HCT116 (cell line): ENCODE measurements at regions of chr6 and their contacts with region 1.

Region 1: DNA sequence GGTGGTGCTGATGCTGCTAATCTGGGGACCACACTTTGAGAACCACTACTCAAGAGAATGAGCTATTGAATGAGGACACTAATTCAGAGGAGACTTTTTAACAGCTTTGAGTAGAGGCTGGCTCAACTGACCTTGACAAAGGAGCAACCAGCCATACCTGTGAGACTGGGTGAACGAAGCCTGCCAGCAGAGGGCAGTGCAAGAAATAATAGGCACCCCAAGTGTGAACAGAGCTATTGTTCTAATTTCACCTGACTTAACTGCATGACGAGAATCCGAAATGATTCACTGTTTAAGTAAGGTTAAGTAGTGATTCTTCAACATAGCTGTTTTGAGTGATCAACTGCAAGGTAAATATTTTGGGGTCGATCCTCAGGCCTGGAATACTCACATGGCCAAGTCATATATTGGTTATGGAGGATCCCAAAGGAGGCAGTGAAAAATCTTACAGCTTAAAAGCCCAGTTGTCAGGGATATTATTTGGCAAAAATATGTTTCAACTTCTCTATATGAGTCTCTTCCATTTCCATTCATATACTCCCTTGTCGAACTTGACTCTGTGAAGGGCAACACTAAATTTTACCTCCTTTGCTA is 550.5 kb upstream of the MARCKS start:
- DNase-seq: peak; percentile 56
- ATAC-seq: peak; percentile 99
- H3K4me3 ChIP-seq: no peak overlapping the region
- H3K27ac ChIP-seq: no peak overlapping the region
- H3K4me1 ChIP-seq: peaks cover 0 to 9% of the 10 kb centered on the region in 2 experiments; a peak in 2 of 4 replicates
- H3K27me3 ChIP-seq: no peaks in the 10 kb centered on the region
- CTCF ChIP-seq: peak; percentile 55 to 91 (median 84); a peak in 5 of 6 replicates
- POLR2A ChIP-seq: no peak
- RAD21 ChIP-seq: peak; percentile 73

Region 2: DNA sequence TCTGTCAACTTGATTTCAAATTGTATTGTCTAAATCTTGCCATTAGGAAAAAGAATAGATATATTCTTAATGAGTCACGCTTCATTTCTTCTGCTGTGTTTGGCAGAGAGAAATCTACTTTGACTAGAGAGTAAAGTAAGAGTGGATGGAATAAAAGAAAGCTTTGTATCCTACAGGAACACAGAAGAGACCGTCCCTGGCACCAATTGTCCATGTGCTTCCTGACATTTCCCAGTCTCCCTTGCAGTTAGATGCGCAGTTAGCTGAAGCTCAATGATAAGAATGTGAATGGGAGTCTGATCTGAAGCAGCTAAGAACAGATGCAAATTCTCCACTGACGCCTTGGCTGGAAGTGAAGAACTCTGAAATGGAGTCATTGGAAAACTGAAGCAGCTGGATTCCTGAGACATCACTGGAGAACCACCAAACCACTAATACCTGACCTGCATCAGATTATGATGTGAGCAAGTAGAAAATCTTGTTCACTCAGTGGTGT is 22.3 kb after region 1 on chr6:
- CTCF ChIA-PET with region 1: interaction called, 15 read pairs
- POLR2A ChIA-PET with region 1: no interaction called
- RAD21 ChIA-PET with region 1: no interaction called
- intact Hi-C with region 1: no loop called
- DNase-seq: no peak
- ATAC-seq: no peak
- H3K4me3 ChIP-seq: no peak overlapping the region
- H3K27ac ChIP-seq: no peak overlapping the region
- H3K4me1 ChIP-seq: no peaks in the 10 kb centered on the region
- H3K27me3 ChIP-seq: no peaks in the 10 kb centered on the region
- CTCF ChIP-seq: no peak
- POLR2A ChIP-seq: no peak
- RAD21 ChIP-seq: no peak

Region 3: GRCh38 chr6:113464959-113465358 is 158.3 kb after region 1 on chr6:
- CTCF ChIA-PET with region 1: interaction called, 10 read pairs
- POLR2A ChIA-PET with region 1: no interaction called
- RAD21 ChIA-PET with region 1: interaction called in 1 of 2 experiments, 3 read pairs
- intact Hi-C with region 1: no loop called
- DNase-seq: peak; percentile 42
- ATAC-seq: peak; percentile 89
- H3K4me3 ChIP-seq: peak overlapping the region in 1 of 2 experiments; percentile 4; a peak in 1 of 4 replicates
- H3K27ac ChIP-seq: no peak overlapping the region
- H3K4me1 ChIP-seq: peaks cover 8 to 19% of the 10 kb centered on the region in 2 experiments
- H3K27me3 ChIP-seq: no peaks in the 10 kb centered on the region
- CTCF ChIP-seq: no peak
- POLR2A ChIP-seq: no peak
- RAD21 ChIP-seq: peak; percentile 26; the same call in 1 of the 2 replicates

Region 4: GRCh38 chr6:113879186-113880096 is 572.8 kb after region 1 on chr6:
- CTCF ChIA-PET with region 1: interaction called, 12 read pairs
- POLR2A ChIA-PET with region 1: no interaction called
- RAD21 ChIA-PET with region 1: interaction called in 1 of 2 experiments, 7 read pairs
- intact Hi-C with region 1: loop called (anchors 1 kb)
- DNase-seq: peak; percentile 68
- ATAC-seq: peak; percentile 100
- H3K4me3 ChIP-seq: no peak overlapping the region
- H3K27ac ChIP-seq: no peak overlapping the region
- H3K4me1 ChIP-seq: peaks cover 0 to 7% of the 10 kb centered on the region in 2 experiments; a peak in 3 of 4 replicates
- H3K27me3 ChIP-seq: no peaks in the 10 kb centered on the region
- CTCF ChIP-seq: peak; percentile 42 to 81 (median 71); a peak in 5 of 6 replicates
- POLR2A ChIP-seq: no peak
- RAD21 ChIP-seq: peak; percentile 88